Ascending aorta (tissue), 2 donors: ENCODE measurements at regions of chr1 and their contacts with region 1.

Region 1: DNA sequence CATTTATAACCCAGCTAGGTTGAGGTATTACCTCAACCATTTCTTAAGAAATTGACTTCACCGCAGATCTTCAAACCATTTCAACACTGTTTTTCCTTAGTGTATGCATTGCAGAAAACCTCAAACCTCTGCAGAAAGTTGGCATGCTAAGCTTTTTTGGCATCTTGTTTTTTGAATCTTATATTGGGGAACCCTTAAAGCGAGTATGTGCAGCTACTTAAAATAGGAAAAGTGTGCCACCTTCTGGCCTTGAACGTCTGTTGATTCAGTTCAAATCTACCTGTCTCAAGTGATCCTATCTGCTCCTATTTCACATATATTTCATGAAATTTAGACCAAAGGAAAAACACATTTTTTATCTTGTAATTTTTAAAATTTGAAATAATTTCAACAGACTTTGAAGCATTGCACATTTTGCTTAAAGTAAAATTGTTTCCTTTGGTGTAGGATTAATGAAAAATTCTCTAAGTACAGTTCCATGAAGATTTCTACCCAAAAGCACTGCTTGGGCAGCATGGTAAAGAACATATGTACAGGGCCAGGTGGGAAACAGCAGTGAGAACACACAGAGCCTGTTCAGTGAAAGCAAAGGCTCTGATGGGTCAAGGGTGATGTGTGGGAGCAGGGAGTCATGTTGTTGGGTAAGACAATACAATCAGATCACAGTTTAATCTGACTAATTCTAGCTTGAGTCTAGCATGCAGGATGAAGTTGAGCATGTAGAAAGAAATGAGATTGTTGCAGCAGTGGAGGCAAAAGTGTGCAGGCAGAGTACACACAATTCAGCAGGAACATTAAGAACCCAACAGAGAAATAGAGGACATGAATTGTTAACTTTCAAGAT is 17.2 kb downstream of the HENMT1 start:
- DNase-seq: no peak
- H3K4me3 ChIP-seq: no peak overlapping the region
- H3K27ac ChIP-seq: no peak overlapping the region
- H3K4me1 ChIP-seq: peaks cover 0 to 6% of the 10 kb centered on the region in 2 donors
- H3K27me3 ChIP-seq: no peaks in the 10 kb centered on the region
- CTCF ChIP-seq: peak; percentile 59 to 74 (median 66)

Region 2: DNA sequence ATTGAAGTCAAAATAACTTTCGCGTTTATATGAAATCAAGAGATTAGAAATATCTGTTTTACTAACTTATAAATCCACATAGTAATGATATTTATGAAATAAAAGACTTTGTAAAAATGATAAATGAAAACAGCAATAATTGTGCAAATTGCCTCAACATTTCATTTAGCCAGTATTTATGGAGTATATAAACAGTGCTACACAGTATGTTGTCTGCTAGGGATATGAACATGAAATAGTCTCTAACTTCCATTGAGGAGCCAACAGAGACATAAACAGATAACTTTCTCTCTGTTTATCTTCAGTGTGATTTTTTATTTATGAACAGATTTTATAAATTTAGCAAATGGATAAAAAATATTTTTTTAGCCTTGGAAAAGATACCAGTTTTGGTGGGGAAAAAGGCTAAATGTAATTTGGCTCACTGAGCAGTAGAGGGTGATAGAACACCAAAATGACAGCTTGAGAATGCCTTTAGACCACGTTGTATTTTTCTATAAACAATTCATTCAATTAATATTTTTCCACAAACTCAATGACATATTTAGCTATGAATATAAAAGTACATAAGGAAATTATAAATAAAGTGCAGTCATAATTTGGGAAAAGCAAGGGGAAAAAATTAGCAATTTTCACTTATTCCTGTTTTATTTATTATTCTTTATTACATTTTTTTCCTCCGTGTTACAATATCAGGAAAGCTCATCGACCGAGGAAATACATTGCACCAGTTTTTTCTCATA is 131.3 kb before region 1 on chr1:
- intact Hi-C with region 1: loop called (anchors 1 kb)
- DNase-seq: no peak
- H3K4me3 ChIP-seq: no peak overlapping the region
- H3K27ac ChIP-seq: no peak overlapping the region
- H3K4me1 ChIP-seq: no peaks in the 10 kb centered on the region
- H3K27me3 ChIP-seq: no peaks in the 10 kb centered on the region
- CTCF ChIP-seq: peak; percentile 68 to 87 (median 81)